ENCODE measurements at regions of chr11 and their contacts with region 1.

Region 1: DNA sequence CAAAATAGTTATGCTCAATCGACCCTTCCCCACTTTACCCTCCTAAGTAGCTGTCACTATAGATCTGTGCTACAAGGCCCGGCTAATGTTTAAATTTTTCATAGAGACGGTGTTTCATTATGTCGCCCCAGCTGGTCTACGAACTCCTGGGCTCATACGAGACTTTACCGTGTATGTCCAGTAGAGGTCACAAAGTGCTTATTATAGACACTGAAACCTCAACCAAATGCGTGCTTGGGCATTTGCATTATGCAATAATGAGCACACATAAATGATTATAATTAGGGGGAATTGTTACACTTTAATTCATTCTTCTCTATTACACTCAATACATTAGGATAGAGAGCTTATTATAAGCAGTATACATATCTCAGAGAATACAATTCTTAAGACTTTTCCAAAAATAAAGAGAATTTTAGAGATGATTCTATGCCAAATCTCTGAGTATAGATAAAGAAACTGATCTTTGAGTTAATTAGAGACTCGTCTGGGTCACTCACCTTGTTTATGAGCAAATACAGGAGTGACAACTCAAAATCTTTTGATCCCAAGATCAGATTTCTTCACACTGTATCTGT is 12.5 kb upstream of the MRPL16 start:
- DNase-seq: peak; percentile 88
- ATAC-seq: peak; percentile 99
- H3K4me3 ChIP-seq: peak overlapping the region; percentile 1; the same call in 1 of the 2 replicates
- H3K27ac ChIP-seq: no peak overlapping the region
- H3K4me1 ChIP-seq: no peaks in the 10 kb centered on the region
- H3K27me3 ChIP-seq: no peaks in the 10 kb centered on the region
- CTCF ChIP-seq: peak; percentile 95

Region 2: GRCh38 chr11:59918987-59919589 is 96.0 kb after region 1 on chr11:
- CTCF ChIA-PET with region 1: interaction called, 11 read pairs
- POLR2A ChIA-PET with region 1: no interaction called
- intact Hi-C with region 1: loop called (anchors 1 kb)
- DNase-seq: peak; percentile 91
- ATAC-seq: peak; percentile 46; the same call in 1 of the 2 replicates
- H3K4me3 ChIP-seq: no peak overlapping the region
- H3K27ac ChIP-seq: peak overlapping the region; percentile 11
- H3K4me1 ChIP-seq: peaks cover 9% of the 10 kb centered on the region
- H3K27me3 ChIP-seq: no peaks in the 10 kb centered on the region
- CTCF ChIP-seq: peak; percentile 92

Region 3: DNA sequence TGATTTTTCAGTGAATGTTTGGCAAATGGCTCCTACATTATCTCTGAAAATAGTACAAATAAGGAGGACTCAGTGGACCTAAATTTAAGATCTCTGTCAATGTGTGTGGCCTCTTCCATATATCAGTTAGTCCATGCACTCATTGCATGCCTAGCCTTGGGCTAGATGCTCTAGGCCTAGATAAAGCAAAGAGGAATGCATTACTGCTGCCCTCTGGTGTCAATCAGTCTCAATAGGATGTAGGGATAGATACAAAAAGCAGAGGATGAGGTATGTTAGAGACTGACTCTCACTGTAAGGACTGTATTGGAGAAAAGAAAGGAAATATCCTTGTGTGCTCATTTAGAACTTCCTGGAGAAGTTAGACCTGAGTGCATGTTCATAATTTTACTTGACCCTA is 307.4 kb after region 1 on chr11:
- CTCF ChIA-PET with region 1: no interaction called
- POLR2A ChIA-PET with region 1: no interaction called
- intact Hi-C with region 1: loop called (anchors 1 kb)
- DNase-seq: peak; percentile 83
- ATAC-seq: peak; percentile 75
- H3K4me3 ChIP-seq: no peak overlapping the region
- H3K27ac ChIP-seq: no peak overlapping the region
- H3K4me1 ChIP-seq: peaks cover 30% of the 10 kb centered on the region
- H3K27me3 ChIP-seq: no peaks in the 10 kb centered on the region
- CTCF ChIP-seq: peak; percentile 88

Region 4: GRCh38 chr11:60193687-60194433 is 370.8 kb after region 1 on chr11:
- CTCF ChIA-PET with region 1: no interaction called
- POLR2A ChIA-PET with region 1: no interaction called
- intact Hi-C with region 1: loop called (anchors 1 kb)
- DNase-seq: peak; percentile 89
- ATAC-seq: peak; percentile 42; the same call in 1 of the 2 replicates
- H3K4me3 ChIP-seq: no peak overlapping the region
- H3K27ac ChIP-seq: no peak overlapping the region
- H3K4me1 ChIP-seq: 0 out of 2 replicates have a peak, but pooled peaks cover 3% of the 10 kb centered on the region
- H3K27me3 ChIP-seq: no peaks in the 10 kb centered on the region
- CTCF ChIP-seq: peak; percentile 96